SK-N-SH (cell line): ENCODE measurements at regions of chr15 and their contacts with region 1.

Region 1: GRCh38 chr15:82999905-83000671 is 11.4 kb downstream of the C15orf40 start:
- DNase-seq: peak; percentile 68
- H3K4me3 ChIP-seq: peak overlapping the region; percentile 27 to 33
- H3K27ac ChIP-seq: no peak overlapping the region
- H3K4me1 ChIP-seq: peaks cover 0 to 7% of the 10 kb centered on the region in 2 experiments; a peak in 1 of 4 replicates
- H3K27me3 ChIP-seq: no peaks in the 10 kb centered on the region
- CTCF ChIP-seq: peak; percentile 70
- EP300 ChIP-seq: no peak
- RAD21 ChIP-seq: peak; percentile 91

Region 2: DNA sequence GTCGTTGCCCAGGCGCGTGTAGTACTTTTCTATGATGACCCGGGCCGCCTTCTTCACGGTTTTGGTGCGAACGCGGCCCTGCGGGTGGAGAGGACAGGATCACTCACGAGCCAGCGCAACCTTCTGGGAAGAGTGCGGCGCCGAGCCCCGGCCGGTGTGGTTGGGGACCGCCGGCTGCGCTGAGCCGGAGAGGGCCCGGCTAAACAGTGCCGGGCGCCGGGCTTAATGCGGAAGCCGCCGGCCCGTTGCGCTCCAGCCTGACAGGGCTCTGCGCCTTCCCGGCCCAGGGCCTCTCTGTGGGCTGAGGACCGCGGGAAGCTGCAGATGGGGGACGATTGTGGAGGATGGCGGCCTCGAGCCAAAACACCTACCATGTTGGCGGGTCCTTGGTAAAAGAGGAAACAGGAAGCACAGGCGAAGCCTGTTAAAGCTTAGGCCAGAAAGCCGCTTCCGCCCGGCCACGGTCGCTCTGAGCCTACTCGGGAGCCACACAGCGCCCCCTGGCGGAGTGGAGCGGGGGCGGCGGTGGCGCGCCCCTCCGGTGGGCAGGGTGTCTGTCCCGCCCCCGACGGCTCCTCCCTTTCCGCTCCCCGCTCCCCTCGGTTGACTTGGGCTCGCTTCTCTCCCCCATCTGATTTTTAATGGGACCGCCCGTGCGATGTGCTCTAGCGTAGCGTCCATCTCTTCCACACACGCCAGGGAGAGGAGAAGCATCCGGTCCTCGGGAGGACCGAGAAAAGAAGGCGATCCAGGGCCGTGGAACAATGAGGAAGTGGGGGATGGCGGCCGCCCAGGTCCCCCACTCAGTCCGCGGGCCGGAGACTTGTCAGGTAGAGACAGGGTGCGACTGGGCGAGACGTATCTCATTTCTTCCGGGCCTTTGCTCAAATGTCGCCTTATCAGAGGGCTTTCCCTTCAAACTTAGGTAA is 459.8 kb before region 1 on chr15 and contains the start of gene RPS17:
- CTCF ChIA-PET with region 1: interaction called, 16 read pairs
- POLR2A ChIA-PET with region 1: interaction called, 7 read pairs
- DNase-seq: peak; percentile 100
- H3K4me3 ChIP-seq: peak within 1 kb of the TSS; percentile 72 to 100
- H3K27ac ChIP-seq: peak within 1 kb of the TSS; percentile 84 to 95
- H3K4me1 ChIP-seq: peaks cover 8 to 19% of the 10 kb centered on the region in 2 experiments
- H3K27me3 ChIP-seq: no peaks in the 10 kb centered on the region
- CTCF ChIP-seq: peak; percentile 95
- EP300 ChIP-seq: peak in 1 of 2 experiments; percentile 43; a peak in 2 of 4 replicates
- RAD21 ChIP-seq: peak; percentile 40; the same call in 1 of the 2 replicates
- polyA plus RNA-seq, gene RPS17: 8,662 and 9,168 TPM in 2 replicates

Region 3: GRCh38 chr15:82809404-82810060 is 190.6 kb before region 1 on chr15 and contains the start of gene WHAMM:
- CTCF ChIA-PET with region 1: interaction called, 12 read pairs
- POLR2A ChIA-PET with region 1: no interaction called
- DNase-seq: peak; percentile 95
- H3K4me3 ChIP-seq: peak within 1 kb of the TSS; percentile 88 to 92
- H3K27ac ChIP-seq: peak within 1 kb of the TSS; percentile 87 to 90
- H3K4me1 ChIP-seq: peaks cover 7 to 9% of the 10 kb centered on the region in 2 experiments; a peak in 2 of 4 replicates
- H3K27me3 ChIP-seq: no peaks in the 10 kb centered on the region
- CTCF ChIP-seq: peak; percentile 28
- EP300 ChIP-seq: no peak
- RAD21 ChIP-seq: no peak
- polyA plus RNA-seq, gene WHAMM: 1.9 and 2.3 TPM in 2 replicates

Region 4: DNA sequence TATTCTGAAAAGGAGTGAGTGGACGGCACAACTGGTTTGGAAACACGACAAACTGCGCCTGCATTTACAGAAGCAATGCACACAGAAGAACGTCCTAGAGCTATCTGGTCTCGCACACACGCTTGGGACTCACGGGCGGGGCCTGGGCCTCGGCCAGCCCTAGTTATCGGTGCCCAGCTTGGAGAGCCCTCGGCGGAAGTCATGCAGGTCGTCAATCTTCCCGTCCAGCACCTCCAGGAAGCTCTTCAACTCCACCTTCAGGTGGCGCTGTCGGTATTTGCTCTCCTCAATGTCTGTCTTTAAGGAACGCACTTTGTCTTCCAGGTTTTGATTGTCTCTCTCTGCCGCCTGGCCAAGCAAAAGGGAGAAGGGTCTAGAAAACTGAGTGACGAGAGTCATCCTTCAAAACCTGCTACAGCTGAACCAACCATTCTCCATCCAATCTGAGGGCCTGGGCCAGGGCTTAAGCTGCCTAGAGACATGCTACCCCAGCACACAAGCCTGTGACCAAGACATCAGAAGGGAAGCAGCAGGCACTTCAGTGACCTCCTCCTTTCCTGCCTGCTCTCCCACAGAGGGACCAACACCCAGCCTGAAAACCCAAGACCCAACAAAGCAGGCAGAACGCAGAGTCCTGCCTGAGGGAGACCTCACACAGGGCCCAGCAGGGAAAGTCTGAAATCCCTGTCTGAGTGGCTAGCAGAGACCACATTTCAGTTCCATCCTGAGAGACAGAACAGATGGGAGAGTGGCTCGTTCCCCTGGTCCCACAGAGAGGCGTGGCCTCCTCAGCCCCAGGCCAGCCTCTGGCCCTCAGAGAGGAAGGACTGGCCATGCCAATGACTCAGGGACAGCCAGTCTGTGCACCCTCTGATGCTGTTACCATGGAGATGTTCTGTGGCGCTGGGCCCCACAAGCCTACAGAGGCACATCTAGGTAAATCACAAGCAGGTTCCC is 150.3 kb before region 1 on chr15:
- CTCF ChIA-PET with region 1: interaction called, 64 read pairs
- POLR2A ChIA-PET with region 1: no interaction called
- DNase-seq: peak; percentile 89
- H3K4me3 ChIP-seq: no peak overlapping the region; a peak in 1 of 4 replicates
- H3K27ac ChIP-seq: peak overlapping the region in 1 of 2 experiments; percentile 90; a peak in 2 of 4 replicates
- H3K4me1 ChIP-seq: peaks cover 4 to 22% of the 10 kb centered on the region in 2 experiments; a peak in 3 of 4 replicates
- H3K27me3 ChIP-seq: no peaks in the 10 kb centered on the region
- CTCF ChIP-seq: peak; percentile 53
- EP300 ChIP-seq: no peak; a peak in 1 of 4 replicates
- RAD21 ChIP-seq: peak; percentile 72

Region 5: DNA sequence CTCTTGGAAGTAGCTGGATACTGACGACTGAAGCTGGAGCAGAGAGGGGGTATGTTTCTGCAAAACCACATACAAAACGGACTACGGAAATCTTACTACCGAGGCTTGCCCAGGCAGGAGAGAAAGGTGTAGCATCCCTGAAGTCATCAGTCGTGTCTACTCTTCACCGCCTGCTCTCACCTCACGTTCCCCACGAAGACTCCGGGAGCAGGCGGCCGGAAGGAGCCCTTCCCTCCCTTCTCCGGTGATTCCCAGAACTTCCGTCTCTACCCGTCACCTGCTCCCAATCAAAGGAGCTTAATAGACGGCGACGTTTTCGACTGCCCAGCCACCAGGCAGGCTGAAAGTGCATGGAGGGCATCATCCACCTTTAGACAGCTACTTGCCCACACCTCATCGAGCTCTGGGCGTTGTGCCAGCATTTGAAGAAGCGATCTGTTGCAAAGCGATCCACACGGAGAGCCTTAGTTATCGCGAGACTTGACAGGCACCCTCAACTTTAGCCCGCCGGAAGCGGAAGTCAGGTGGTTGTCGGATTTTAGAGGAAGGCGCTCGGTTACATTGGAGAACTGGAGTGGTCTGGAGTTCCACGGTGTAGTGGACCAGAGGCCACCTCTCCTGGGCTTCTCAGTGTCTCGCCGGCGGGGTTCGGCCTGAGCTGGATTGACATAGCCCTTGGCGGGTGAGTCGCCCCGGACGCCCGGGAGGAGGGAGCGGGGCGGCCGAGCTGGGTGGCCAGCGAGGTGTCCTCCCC is 14.2 kb before region 1 on chr15 and contains the start of gene RAMAC:
- CTCF ChIA-PET with region 1: interaction called, 15 read pairs
- POLR2A ChIA-PET with region 1: no interaction called
- DNase-seq: peak; percentile 87
- H3K4me3 ChIP-seq: peak within 1 kb of the TSS; percentile 88 to 92
- H3K27ac ChIP-seq: peak within 1 kb of the TSS; percentile 69 to 94
- H3K4me1 ChIP-seq: peaks cover 8 to 10% of the 10 kb centered on the region in 2 experiments; a peak in 3 of 4 replicates
- H3K27me3 ChIP-seq: no peaks in the 10 kb centered on the region
- CTCF ChIP-seq: no peak
- EP300 ChIP-seq: 0 out of 4 replicates have a peak, but pooled peaks of 1 of the 2 experiments have one; percentile 22
- RAD21 ChIP-seq: 0 out of 2 replicates have a peak, but pooled peaks have one; percentile 4
- polyA plus RNA-seq, gene RAMAC: 25.9 and 33.3 TPM in 2 replicates

Region 6: DNA sequence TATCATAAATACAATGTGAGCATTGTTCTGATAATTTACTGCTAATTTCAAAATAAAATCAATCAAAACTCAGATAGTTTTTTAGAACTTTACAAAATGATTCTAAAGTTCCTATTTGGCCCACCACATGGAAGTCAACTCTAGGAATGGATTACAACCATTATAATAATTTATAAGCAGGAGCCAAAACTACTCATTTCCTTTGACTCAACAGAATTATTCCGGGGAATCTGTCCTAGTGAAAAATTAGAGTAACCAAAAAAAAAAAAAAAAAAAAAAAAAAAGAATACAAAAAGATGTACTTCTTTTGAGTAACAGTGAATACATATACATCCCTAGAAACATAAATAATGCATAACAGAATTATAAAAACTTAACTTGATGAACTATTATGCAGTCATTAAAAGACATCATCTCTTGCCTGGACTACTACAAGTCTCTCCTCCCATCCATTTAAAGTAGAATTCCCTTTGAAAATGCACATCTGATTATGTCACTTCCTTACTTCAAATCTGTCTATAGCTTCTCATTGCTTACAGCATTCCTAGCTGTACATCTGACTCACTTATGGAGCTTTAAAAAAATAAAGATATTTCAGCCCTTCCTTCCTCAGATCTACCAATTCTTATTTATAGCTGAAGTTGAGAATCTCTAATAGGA is 164.2 kb after region 1 on chr15:
- CTCF ChIA-PET with region 1: no interaction called
- POLR2A ChIA-PET with region 1: no interaction called
- DNase-seq: no peak
- H3K4me3 ChIP-seq: no peak overlapping the region
- H3K27ac ChIP-seq: peak overlapping the region in 1 of 2 experiments; percentile 71; a peak in 2 of 4 replicates
- H3K4me1 ChIP-seq: peaks cover 0 to 8% of the 10 kb centered on the region in 2 experiments; a peak in 1 of 4 replicates
- H3K27me3 ChIP-seq: no peaks in the 10 kb centered on the region
- CTCF ChIP-seq: no peak; the same call in 1 of the 2 replicates
- EP300 ChIP-seq: no peak
- RAD21 ChIP-seq: no peak